GM18951 (cell line): ENCODE measurements at regions of chr19 and their contacts with region 1.

Region 1: GRCh38 chr19:39532233-39533002 is at the start of gene EID2B:
- POLR2A ChIP-seq: peak; percentile 71

Region 2: DNA sequence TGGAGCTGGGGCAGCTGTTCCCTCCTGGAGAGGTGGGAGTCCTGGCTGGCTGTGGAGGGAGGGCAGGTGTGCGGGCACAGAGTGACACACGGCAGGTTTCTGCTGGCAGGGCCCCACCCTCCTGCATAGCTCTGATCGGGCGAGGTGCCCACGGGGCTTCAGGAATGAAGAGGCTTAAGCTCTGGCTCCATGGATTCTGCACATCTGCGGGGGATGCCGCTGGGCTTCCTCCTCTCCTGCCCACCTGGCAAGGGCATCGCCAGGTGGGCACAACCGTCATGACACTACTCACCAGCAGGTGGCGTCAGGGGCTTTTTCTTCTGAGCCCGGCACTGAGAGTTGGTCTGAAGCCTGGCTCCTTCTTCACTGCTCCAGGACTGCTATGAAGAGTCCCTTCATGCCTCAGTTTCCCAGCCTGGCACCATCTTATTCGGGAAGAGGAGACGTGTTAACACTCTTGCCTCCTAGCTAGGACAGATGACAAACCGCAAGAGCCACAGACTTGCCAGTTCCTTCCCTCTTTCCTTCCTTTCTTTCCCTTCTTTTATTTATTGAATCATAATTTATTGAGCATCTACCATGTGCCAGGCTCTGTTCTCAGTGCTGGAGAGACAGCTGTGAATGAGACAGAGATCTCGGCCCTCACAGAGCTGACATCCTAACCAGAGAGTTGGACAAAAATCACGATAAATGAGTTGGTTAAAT is 422.0 kb before region 1 on chr19:
- in situ Hi-C with region 1: loop called (anchors 10 kb)
- POLR2A ChIP-seq: no peak

Region 3: GRCh38 chr19:39372047-39372802 is 160.2 kb before region 1 on chr19:
- in situ Hi-C with region 1: no loop called
- POLR2A ChIP-seq: no peak

Region 4: GRCh38 chr19:39631178-39631577 is 98.8 kb after region 1 on chr19:
- in situ Hi-C with region 1: no loop called
- POLR2A ChIP-seq: no peak

Region 5: DNA sequence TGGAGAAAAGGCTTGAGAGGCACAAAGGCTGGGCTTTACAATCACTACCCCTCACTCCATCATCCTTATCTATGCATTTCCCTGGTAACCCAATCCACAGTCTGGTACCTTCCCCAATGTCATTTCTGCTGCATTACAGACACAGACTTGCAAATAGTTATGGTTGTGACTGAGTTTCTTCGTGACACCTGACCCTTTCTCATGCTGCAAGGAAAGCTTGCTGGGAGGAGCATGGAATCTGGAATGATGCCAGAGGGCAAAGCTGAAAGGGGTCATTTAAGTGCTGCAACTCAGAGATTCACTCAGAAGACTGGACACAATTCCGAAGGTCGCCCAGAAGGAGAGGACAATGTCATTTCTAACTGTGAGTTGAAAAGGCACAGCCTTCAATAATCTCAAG is 123.2 kb after region 1 on chr19 and contains the start of gene LGALS16:
- in situ Hi-C with region 1: no loop called
- POLR2A ChIP-seq: no peak

Region 6: GRCh38 chr19:39818626-39819097 is 286.2 kb after region 1 on chr19:
- in situ Hi-C with region 1: no loop called
- POLR2A ChIP-seq: no peak